H1 (cell line): ENCODE measurements at regions of chr10 and their contacts with region 1.

Region 1: GRCh38 chr10:73096449-73097304 is at the start of gene P4HA1:
- DNase-seq: peak; percentile 85 to 97
- H3K4me3 ChIP-seq: peak within 1 kb of the TSS; percentile 50 to 89 (median 78)
- H3K27ac ChIP-seq: peak within 1 kb of the TSS; percentile 78
- H3K4me1 ChIP-seq: peaks cover 0 to 2% (median 0%) of the 10 kb centered on the region in 4 experiments; a peak in 1 of 7 replicates
- H3K27me3 ChIP-seq: no peaks in the 10 kb centered on the region
- CTCF ChIP-seq: peak; percentile 75 to 79 (median 76)
- EP300 ChIP-seq: no peak; a peak in 1 of 3 replicates
- POLR2A ChIP-seq: peak; percentile 98 to 99
- RAD21 ChIP-seq: peak; percentile 57 to 71
- total RNA-seq, gene P4HA1: 25.3 and 25.7 TPM in 2 replicates

Region 2: GRCh38 chr10:72637398-72637857 is 459.2 kb before region 1 on chr10:
- CTCF ChIA-PET with region 1: no interaction called
- POLR2A ChIA-PET with region 1: no interaction called
- DNase-seq: no peak
- H3K4me3 ChIP-seq: no peak overlapping the region
- H3K27ac ChIP-seq: no peak overlapping the region
- H3K4me1 ChIP-seq: peaks cover 0 to 3% (median 0%) of the 10 kb centered on the region in 4 experiments; a peak in 1 of 7 replicates
- H3K27me3 ChIP-seq: no peaks in the 10 kb centered on the region
- CTCF ChIP-seq: no peak
- EP300 ChIP-seq: no peak
- POLR2A ChIP-seq: no peak
- RAD21 ChIP-seq: no peak

Region 3: GRCh38 chr10:73076360-73077183 is 20.1 kb before region 1 on chr10:
- CTCF ChIA-PET with region 1: interaction called, 4 read pairs
- POLR2A ChIA-PET with region 1: interaction called, 17 read pairs
- DNase-seq: no peak
- H3K4me3 ChIP-seq: no peak overlapping the region
- H3K27ac ChIP-seq: no peak overlapping the region
- H3K4me1 ChIP-seq: no peaks in the 10 kb centered on the region
- H3K27me3 ChIP-seq: no peaks in the 10 kb centered on the region
- CTCF ChIP-seq: no peak
- EP300 ChIP-seq: no peak
- POLR2A ChIP-seq: no peak
- RAD21 ChIP-seq: no peak

Region 4: GRCh38 chr10:73110345-73110849 is 13.7 kb after region 1 on chr10 and contains the start of gene NUDT13:
- CTCF ChIA-PET with region 1: interaction called, 41 read pairs
- POLR2A ChIA-PET with region 1: interaction called, 82 read pairs
- DNase-seq: peak; percentile 56 to 58
- H3K4me3 ChIP-seq: peak within 1 kb of the TSS; percentile 67 to 78 (median 74)
- H3K27ac ChIP-seq: peak within 1 kb of the TSS; percentile 61; the same call in 1 of the 2 replicates
- H3K4me1 ChIP-seq: peaks cover 0 to 2% (median 0%) of the 10 kb centered on the region in 4 experiments; a peak in 1 of 7 replicates
- H3K27me3 ChIP-seq: no peaks in the 10 kb centered on the region
- CTCF ChIP-seq: no peak
- EP300 ChIP-seq: no peak
- POLR2A ChIP-seq: peak; percentile 51 to 64
- RAD21 ChIP-seq: no peak
- total RNA-seq, gene NUDT13: 1.5 and 1.9 TPM in 2 replicates